Heart right ventricle (tissue), 16 donors: ENCODE measurements at regions of chr12 and their contacts with region 1.

Region 1: GRCh38 chr12:89352492-89353187 is at the start of gene DUSP6:
- DNase-seq: peak; percentile 90 to 96
- ATAC-seq: peak; percentile 72 to 89 (median 85)
- H3K4me3 ChIP-seq: peak within 1 kb of the TSS; percentile 66 to 94 (median 82)
- H3K27ac ChIP-seq: peak within 1 kb of the TSS; percentile 92 to 100 (median 99)
- H3K4me1 ChIP-seq: peaks cover 0 to 53% (median 41%) of the 10 kb centered on the region in 9 donors
- H3K27me3 ChIP-seq: no peaks in the 10 kb centered on the region
- CTCF ChIP-seq: no peak
- total RNA-seq, gene DUSP6: 19.7 to 43.4 (median 26.0) TPM

Region 2: DNA sequence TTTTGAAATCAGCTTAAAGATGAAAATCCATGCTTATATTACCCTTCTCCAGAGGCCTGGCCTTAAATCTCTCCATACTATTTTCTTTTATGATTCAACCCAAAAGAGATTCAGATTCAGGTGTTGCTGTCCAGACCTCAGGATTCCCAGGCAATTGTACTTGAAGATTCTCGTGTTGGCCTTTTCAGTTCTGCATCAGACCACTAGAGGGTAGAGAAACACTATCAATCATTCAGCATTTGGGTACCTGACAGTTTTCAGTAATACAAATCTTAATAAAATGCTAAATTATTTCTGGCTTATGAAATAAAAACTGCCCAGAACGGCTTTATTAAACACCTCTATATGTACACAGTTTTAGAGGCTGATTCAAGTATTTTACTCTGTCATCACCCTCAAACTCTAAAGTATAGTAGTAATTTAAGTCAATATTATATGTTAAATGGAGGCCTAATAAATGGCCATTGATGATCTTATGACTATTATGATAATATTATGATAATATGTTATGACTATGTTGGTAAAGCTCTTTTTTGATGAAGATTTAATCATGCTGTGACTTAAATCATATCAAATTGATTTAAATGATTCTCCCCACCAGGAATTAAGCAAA is 301.5 kb before region 1 on chr12:
- intact Hi-C with region 1: loop called in 8 of 10 experiments (anchors 2 to 10 kb)
- DNase-seq: peak in 1 of 2 donors; percentile 44
- ATAC-seq: peak in 6 of 8 donors; percentile 70 to 85 (median 79)
- H3K4me3 ChIP-seq: no peak overlapping the region
- H3K27ac ChIP-seq: no peak overlapping the region
- H3K4me1 ChIP-seq: peaks cover 0 to 7% (median 0%) of the 10 kb centered on the region in 9 donors
- H3K27me3 ChIP-seq: no peaks in the 10 kb centered on the region
- CTCF ChIP-seq: peak; percentile 83 to 97 (median 93)

Region 3: DNA sequence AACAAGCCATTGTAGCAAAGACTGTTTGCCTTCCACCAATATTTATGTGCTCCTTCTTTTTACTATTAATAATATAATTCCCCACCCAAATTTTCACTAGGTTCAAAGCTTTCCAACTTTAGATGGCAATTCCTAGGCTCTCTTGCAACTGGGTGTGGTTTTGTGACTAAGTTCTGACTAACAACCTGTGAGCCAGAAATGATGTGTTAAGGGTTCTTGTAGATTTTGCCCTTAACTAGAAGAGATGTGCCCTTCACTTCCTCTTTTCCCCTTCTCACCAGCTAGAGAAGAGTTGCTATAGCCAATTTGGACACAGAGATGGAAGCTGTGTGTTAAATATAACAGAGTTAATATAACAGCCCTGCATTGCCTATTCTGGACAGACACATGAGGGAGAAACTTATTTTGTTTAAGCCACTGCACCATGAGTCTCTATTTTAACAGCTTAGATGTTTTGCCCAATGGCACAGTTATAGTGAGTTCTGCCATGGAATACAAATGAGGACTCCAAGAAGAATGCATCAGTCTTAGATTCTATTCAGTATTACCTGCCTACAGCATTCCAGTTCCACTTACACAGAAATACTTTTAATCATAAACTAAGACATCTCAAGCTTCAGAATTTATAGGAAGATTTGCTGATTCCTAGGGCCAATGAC is 216.5 kb before region 1 on chr12:
- intact Hi-C with region 1: loop called in 2 of 10 experiments (anchors 5 to 10 kb)
- DNase-seq: no peak
- ATAC-seq: peak in 1 of 8 donors; percentile 32
- H3K4me3 ChIP-seq: no peak overlapping the region
- H3K27ac ChIP-seq: no peak overlapping the region
- H3K4me1 ChIP-seq: peaks cover 0 to 24% (median 11%) of the 10 kb centered on the region in 9 donors
- H3K27me3 ChIP-seq: no peaks in the 10 kb centered on the region
- CTCF ChIP-seq: no peak

Region 4: GRCh38 chr12:89212339-89212771 is 140.3 kb before region 1 on chr12:
- intact Hi-C with region 1: loop called in 5 of 10 experiments (anchors 5 to 10 kb)
- DNase-seq: peak; percentile 32 to 43
- ATAC-seq: peak; percentile 77 to 96 (median 95)
- H3K4me3 ChIP-seq: no peak overlapping the region
- H3K27ac ChIP-seq: peak overlapping the region; percentile 4 to 86 (median 57)
- H3K4me1 ChIP-seq: peaks cover 0 to 49% (median 12%) of the 10 kb centered on the region in 9 donors
- H3K27me3 ChIP-seq: no peaks in the 10 kb centered on the region
- CTCF ChIP-seq: no peak

Region 5: DNA sequence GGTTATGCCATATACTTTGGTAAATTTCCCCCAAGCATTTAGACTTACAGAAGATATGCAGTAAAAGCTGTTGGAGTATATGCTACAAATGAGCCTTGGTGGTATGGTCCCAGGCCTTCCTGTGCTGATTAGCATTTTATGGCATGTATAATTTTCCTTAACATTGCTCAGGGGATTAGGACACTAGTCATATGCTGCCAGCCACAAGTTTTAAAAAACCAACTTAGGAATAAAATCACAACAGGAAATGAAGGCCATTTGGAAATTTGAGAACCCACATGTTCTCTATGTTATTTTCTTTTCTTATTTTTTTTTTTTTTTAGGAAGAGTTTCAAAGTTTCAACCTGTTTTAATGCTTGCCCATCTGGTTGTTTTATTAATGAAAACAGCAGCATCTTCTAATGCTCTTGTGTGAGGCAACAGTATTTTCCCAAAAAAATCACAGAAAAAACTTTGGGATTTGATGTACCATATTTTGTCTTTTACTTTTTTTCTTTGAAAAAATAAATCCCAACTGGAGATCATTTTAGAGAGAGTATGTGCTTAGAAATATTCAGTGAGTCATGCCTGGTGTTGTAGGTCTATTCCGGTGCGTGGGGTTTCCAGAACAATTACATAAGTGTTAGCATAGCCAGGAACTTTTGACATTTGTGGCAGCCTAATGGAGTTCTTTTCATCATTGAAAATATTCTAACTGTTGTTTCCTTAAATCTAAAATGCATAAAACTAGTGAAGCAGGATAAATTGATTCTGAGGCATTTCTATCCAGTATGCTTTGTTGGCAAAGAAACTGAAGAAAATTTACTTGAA is 21.3 kb after region 1 on chr12:
- intact Hi-C with region 1: loop called in 1 of 10 experiments (anchors 2 kb)
- DNase-seq: peak in 1 of 2 donors; percentile 55
- ATAC-seq: peak; percentile 74 to 92 (median 91)
- H3K4me3 ChIP-seq: no peak overlapping the region
- H3K27ac ChIP-seq: peak overlapping the region; percentile 17 to 79 (median 64)
- H3K4me1 ChIP-seq: peaks cover 10 to 53% (median 28%) of the 10 kb centered on the region in 9 donors
- H3K27me3 ChIP-seq: no peaks in the 10 kb centered on the region
- CTCF ChIP-seq: no peak

Region 6: DNA sequence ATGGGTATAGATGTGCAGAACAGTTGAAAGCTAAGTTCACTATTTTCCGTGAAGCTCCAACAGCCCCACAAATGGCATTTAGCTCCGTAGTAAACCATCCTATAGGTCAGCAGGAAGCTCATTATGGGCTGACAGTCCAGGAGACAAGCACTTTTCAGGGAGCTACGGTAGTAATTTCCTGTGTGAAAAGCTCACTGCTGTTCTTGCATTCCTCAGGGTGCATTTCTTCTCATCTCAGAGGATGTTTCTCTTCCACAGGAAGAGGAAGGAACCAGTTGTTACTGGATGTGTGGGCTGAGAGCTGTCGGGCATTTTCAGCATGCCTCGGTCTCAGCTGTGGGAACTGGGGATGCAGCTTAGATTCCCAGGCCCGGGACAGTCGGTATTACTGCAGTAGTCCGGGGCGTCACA is 99.2 kb after region 1 on chr12:
- intact Hi-C with region 1: loop called in 9 of 10 experiments (anchors 2 to 10 kb)
- DNase-seq: peak; percentile 35 to 38
- ATAC-seq: peak; percentile 53 to 78 (median 72)
- H3K4me3 ChIP-seq: peak overlapping the region in 2 of 10 donors; percentile 0 to 7
- H3K27ac ChIP-seq: peak overlapping the region in 9 of 10 donors; percentile 24 to 85 (median 71)
- H3K4me1 ChIP-seq: peaks cover 0 to 43% (median 41%) of the 10 kb centered on the region in 9 donors
- H3K27me3 ChIP-seq: no peaks in the 10 kb centered on the region
- CTCF ChIP-seq: no peak

Region 7: GRCh38 chr12:89524541-89525285 is 172.1 kb after region 1 on chr12 and contains the start of gene GALNT4:
- intact Hi-C with region 1: loop called in 4 of 10 experiments (anchors 5 to 10 kb)
- DNase-seq: peak; percentile 83 to 90
- ATAC-seq: peak; percentile 92 to 96 (median 94)
- H3K4me3 ChIP-seq: peak within 1 kb of the TSS; percentile 71 to 97 (median 92)
- H3K27ac ChIP-seq: peak within 1 kb of the TSS; percentile 82 to 95 (median 92)
- H3K4me1 ChIP-seq: peaks cover 2 to 55% (median 44%) of the 10 kb centered on the region in 9 donors
- H3K27me3 ChIP-seq: no peaks in the 10 kb centered on the region
- CTCF ChIP-seq: peak; percentile 54 to 81 (median 69)
- total RNA-seq, gene GALNT4: 1.4 to 3.8 (median 2.1) TPM